B cell (primary cell): ENCODE measurements at regions of chr3 and their contacts with region 1.

Region 1: DNA sequence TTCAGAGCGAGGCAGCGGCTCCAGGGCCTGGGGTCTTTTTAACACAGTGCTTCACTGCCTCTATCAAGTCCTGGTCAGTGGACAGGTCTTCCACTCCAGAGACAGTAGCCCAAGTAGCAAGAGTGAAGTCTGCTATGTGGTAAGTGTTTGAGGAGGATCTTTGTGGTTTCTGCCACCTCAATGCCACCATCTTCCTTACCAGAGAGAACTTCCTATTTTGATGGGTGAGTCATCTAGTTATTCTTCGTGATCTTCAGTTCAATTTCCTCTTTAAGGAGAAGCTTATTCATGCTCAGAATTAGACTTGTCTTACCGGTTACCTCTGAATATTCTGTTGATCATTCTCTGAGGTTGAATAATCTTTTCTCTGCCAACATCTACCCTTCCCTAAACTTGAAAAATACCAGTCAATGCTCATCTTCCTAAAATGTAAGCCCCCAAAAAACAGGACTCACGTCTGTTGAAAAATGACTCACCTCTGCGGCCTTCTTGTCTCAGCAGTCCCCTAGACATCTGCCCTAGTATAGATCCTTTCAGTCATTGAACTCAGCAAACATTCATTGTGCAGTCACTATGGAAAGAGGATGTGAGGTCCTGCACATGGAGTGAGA is 32.2 kb upstream of the BCL6 start:
- DNase-seq: peak; percentile 78
- ATAC-seq: peak; percentile 80
- H3K4me3 ChIP-seq: no peak overlapping the region
- H3K4me3 Mint-ChIP-seq: peak overlapping the region; percentile 62
- H3K27ac ChIP-seq: peak overlapping the region in 1 of 2 donors; percentile 6
- H3K27ac Mint-ChIP-seq: peak overlapping the region; percentile 89
- H3K4me1 ChIP-seq: peaks cover 29 to 35% of the 10 kb centered on the region in 2 donors
- H3K4me1 Mint-ChIP-seq: peaks cover 33% of the 10 kb centered on the region
- H3K27me3 ChIP-seq: no peaks in the 10 kb centered on the region
- H3K27me3 Mint-ChIP-seq: no peaks in the 10 kb centered on the region
- CTCF ChIP-seq: no peak

Region 2: GRCh38 chr3:188108703-188109412 is 331.4 kb after region 1 on chr3:
- CTCF ChIA-PET with region 1: no interaction called
- POLR2A ChIA-PET with region 1: no interaction called
- intact Hi-C with region 1: loop called (anchors 2 kb)
- DNase-seq: peak; percentile 62
- ATAC-seq: peak; percentile 92
- H3K4me3 ChIP-seq: no peak overlapping the region
- H3K4me3 Mint-ChIP-seq: peak overlapping the region; percentile 59
- H3K27ac ChIP-seq: peak overlapping the region in 1 of 2 donors; percentile 52
- H3K27ac Mint-ChIP-seq: peak overlapping the region; percentile 87
- H3K4me1 ChIP-seq: peaks cover 19 to 29% of the 10 kb centered on the region in 2 donors
- H3K4me1 Mint-ChIP-seq: peaks cover 31% of the 10 kb centered on the region
- H3K27me3 ChIP-seq: no peaks in the 10 kb centered on the region
- H3K27me3 Mint-ChIP-seq: no peaks in the 10 kb centered on the region
- CTCF ChIP-seq: no peak